ENCODE measurements at regions of chr19 and their contacts with region 1.

Region 1: GRCh38 chr19:52527134-52527955 is at the start of gene ZNF808:
- DNase-seq: peak; percentile 99
- ATAC-seq: peak; percentile 92
- H3K4me3 Mint-ChIP-seq: peak within 1 kb of the TSS; percentile 91
- H3K27ac Mint-ChIP-seq: peak within 1 kb of the TSS; percentile 94
- H3K4me1 Mint-ChIP-seq: peaks cover 23% of the 10 kb centered on the region
- H3K27me3 Mint-ChIP-seq: no peaks in the 10 kb centered on the region
- total RNA-seq, gene ZNF808: 25.7 to 29.9 TPM

Region 2: DNA sequence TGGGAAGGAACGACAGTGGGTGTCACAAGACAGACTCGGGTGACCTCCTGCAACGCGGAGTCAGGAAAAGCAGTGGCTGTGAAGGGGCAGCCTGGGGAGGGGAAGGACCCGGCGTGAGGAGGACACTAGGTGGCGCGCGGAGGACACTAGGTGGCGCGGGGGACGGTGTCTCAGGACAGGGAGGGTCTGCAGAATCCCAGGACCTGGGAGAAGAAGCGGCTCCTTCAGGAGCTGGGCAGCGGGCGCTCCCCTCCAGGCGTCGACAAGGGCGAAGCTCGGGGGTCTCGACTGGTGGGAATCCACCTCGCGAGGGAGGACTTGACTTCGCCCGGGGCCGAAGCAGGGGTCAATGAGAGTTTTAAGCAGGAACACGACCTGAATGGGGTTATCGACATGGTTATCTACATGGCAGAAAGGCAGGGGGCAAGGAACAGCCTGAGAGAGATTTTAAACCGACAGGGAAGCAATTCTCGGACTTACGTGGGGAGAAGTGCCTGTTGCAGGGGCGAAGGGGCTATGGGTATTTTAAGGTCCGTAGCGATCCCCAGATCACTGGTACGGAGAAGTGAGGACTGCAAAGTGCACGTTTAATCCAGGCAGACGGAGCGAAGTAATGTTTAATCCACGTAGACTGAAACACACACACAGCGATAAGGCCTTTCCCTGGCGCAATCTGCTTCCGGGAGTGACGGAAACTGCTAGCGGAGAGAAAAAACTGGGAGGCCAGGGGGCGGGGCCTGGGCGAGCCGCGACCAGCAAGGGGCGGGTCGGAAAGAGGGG is 387.9 kb before region 1 on chr19 and contains the start of gene ZNF616:
- CTCF ChIA-PET with region 1: no interaction called
- POLR2A ChIA-PET with region 1: no interaction called
- intact Hi-C with region 1: loop called in 1 of 2 experiments (anchors 1 kb)
- DNase-seq: peak; percentile 90
- ATAC-seq: peak; percentile 81
- H3K4me3 Mint-ChIP-seq: peak within 1 kb of the TSS; percentile 96
- H3K27ac Mint-ChIP-seq: peak within 1 kb of the TSS; percentile 97
- H3K4me1 Mint-ChIP-seq: peaks cover 27% of the 10 kb centered on the region
- H3K27me3 Mint-ChIP-seq: no peaks in the 10 kb centered on the region
- total RNA-seq, gene ZNF616: 13.9 to 15.7 TPM

Region 3: GRCh38 chr19:52269338-52270261 is 257.7 kb before region 1 on chr19 and contains the start of gene ZNF766:
- CTCF ChIA-PET with region 1: no interaction called
- POLR2A ChIA-PET with region 1: no interaction called
- intact Hi-C with region 1: loop called in 1 of 2 experiments (anchors 1 kb)
- DNase-seq: peak; percentile 98
- ATAC-seq: peak; percentile 99
- H3K4me3 Mint-ChIP-seq: peak within 1 kb of the TSS; percentile 96
- H3K27ac Mint-ChIP-seq: peak within 1 kb of the TSS; percentile 96
- H3K4me1 Mint-ChIP-seq: peaks cover 35% of the 10 kb centered on the region
- H3K27me3 Mint-ChIP-seq: no peaks in the 10 kb centered on the region
- total RNA-seq, gene ZNF766: 28.6 to 34.2 TPM

Region 4: GRCh38 chr19:52397310-52398080 is 129.8 kb before region 1 on chr19 and contains the start of gene ZNF528:
- CTCF ChIA-PET with region 1: no interaction called
- POLR2A ChIA-PET with region 1: no interaction called
- intact Hi-C with region 1: loop called in 1 of 2 experiments (anchors 1 kb)
- DNase-seq: peak; percentile 98
- ATAC-seq: peak; percentile 100
- H3K4me3 Mint-ChIP-seq: peak within 1 kb of the TSS; percentile 79
- H3K27ac Mint-ChIP-seq: peak within 1 kb of the TSS; percentile 94
- H3K4me1 Mint-ChIP-seq: peaks cover 14% of the 10 kb centered on the region
- H3K27me3 Mint-ChIP-seq: no peaks in the 10 kb centered on the region
- total RNA-seq, gene ZNF528: 8.2 to 8.6 TPM

Region 5: DNA sequence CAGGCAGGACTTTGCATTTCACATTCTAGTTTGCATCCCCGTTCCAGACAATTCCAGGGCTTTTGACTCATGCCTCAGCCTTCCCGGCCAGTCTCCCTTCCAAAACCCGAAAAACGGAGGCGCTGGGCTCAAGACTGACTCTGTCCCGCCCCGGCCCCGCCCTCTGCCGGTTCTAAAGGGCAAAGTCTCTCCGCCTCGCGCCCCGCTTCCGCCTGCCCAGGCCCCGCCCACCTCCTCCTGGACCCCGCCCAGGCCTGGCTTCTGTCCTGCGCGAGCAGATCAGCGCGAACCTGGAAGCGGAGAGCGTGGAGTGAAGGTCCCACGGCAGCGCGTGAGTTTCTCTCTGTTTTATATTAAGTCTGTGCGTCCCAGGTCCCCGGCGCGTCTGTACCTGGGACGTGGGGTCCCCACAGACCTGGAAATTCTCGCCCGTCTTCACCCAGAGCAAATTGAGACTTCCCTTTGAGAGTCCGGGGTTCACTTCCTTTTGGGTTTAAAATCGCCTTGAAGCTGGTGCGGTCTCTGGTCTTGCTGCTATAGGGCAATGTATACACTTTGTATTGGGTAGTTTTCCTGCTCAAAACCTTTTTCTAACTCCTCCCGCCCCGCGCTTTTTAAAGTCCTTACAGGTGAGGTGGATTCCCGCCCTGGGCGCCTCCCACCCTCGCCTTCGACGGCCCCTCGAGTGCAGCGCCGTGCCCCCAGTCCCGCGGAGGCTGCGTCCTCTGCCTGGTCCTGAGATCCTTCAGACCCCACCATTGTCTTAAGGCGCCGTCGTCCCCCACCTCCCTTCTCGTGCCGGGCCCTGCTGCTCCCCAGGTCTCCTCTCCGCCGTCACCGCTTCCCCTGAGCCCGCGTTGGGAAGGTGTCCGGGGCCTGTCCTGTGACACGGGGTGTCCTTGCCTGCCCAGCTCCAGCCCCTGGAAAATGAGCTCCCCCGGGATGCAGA is 74.0 kb after region 1 on chr19:
- CTCF ChIA-PET with region 1: no interaction called
- POLR2A ChIA-PET with region 1: no interaction called
- intact Hi-C with region 1: loop called (anchors 1 to 2 kb)
- DNase-seq: peak; percentile 97
- ATAC-seq: peak; percentile 98
- H3K4me3 Mint-ChIP-seq: peak overlapping the region; percentile 86
- H3K27ac Mint-ChIP-seq: peak overlapping the region; percentile 83
- H3K4me1 Mint-ChIP-seq: peaks cover 26% of the 10 kb centered on the region
- H3K27me3 Mint-ChIP-seq: no peaks in the 10 kb centered on the region

Region 6: DNA sequence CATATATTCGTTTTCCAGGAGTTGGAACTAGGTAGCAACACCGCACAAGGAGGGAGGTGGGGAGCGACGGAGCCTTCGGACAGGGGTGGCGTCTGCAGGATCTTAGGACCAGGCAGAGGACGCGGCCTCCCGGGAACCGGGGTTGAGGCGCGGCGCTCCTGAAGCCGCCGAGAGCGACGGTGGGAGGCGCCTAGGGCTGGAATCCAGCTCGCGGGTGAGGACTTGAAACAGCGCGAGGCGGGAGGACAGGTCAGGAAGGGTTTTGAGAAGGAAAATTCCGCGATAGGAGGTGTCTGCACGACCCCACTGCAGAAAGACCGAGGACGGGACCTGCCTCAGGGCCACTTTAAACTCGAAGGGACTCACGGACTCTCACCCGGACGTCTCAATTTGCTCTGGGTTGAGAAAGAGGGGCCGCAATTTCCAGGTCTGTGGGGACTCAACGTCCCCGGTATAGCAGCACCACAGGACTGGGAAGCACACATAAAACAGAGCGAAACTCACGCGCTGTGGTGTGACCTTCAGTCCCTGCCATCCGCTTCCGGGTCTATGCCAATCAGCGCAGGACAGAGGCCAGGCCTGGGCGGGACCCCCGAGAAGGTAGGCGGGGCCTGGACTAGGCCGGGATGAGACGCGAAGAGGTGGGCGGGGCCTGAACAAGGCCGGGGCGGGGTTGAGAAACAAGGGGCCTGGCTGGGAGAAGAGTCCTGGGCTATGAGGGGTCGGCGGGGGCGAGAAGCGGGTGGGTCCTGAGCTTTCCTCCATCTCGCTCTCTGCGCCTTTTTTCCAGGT is 370.0 kb after region 1 on chr19 and contains the start of gene ZNF320:
- CTCF ChIA-PET with region 1: no interaction called
- POLR2A ChIA-PET with region 1: no interaction called
- intact Hi-C with region 1: loop called in 1 of 2 experiments (anchors 5 kb)
- DNase-seq: peak; percentile 98
- ATAC-seq: peak; percentile 100
- H3K4me3 Mint-ChIP-seq: peak within 1 kb of the TSS; percentile 88
- H3K27ac Mint-ChIP-seq: peak within 1 kb of the TSS; percentile 93
- H3K4me1 Mint-ChIP-seq: peaks cover 31% of the 10 kb centered on the region
- H3K27me3 Mint-ChIP-seq: no peaks in the 10 kb centered on the region
- total RNA-seq, gene ZNF320: 10.8 to 12.2 TPM